ENCODE measurements at regions of chr18 and their contacts with region 1.

Region 1: GRCh38 chr18:23416298-23416697 is 36.8 kb upstream of the RIOK3 start:
- DNase-seq: no peak
- H3K4me3 ChIP-seq: no peak overlapping the region
- H3K4me1 ChIP-seq: no peaks in the 10 kb centered on the region
- H3K27me3 ChIP-seq: no peaks in the 10 kb centered on the region

Region 2: GRCh38 chr18:22800551-22800951 is 615.7 kb before region 1 on chr18:
- in situ Hi-C with region 1: loop called (anchors 10 kb)
- DNase-seq: no peak
- H3K4me3 ChIP-seq: no peak overlapping the region
- H3K4me1 ChIP-seq: no peaks in the 10 kb centered on the region; the same call in 1 of the 2 replicates
- H3K27me3 ChIP-seq: no peaks in the 10 kb centered on the region

Region 3: GRCh38 chr18:23032030-23032582 is 384.2 kb before region 1 on chr18:
- in situ Hi-C with region 1: loop called (anchors 10 kb)
- DNase-seq: peak; percentile 60 to 78
- H3K4me3 ChIP-seq: no peak overlapping the region
- H3K4me1 ChIP-seq: peaks cover 23% of the 10 kb centered on the region
- H3K27me3 ChIP-seq: no peaks in the 10 kb centered on the region

Region 4: DNA sequence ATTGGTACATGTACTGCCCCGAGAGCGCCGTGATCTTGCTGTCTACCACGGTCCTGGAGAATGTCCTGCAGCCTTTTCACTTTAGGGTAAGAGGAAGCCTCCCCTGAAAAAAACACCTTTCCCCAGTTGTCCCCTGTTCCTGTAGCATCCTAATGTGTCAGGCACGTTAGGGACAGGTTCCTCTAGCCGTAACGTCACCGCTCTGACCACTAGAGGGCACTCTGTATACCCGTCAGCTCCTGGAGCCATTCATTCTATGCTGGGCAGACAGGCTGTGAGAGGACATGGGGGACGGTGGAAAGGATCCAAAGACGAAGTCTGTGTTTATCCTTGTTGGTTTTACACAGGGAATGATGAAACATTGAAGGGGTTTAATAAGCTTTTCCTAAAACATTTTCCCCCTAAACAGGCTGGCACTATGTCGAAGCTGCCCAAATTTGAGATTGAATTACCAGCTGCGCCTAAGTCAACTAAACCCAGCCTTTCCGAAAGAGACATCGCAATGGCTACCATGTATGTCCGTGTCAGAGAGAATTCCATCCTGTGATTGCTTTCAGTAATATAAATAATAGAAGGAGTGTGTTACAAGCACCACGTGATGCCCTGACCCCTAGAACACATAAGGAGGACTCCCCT is 99.7 kb after region 1 on chr18:
- in situ Hi-C with region 1: no loop called
- DNase-seq: peak; percentile 64 to 84
- H3K4me3 ChIP-seq: no peak overlapping the region
- H3K4me1 ChIP-seq: no peaks in the 10 kb centered on the region
- H3K27me3 ChIP-seq: no peaks in the 10 kb centered on the region

Region 5: GRCh38 chr18:23798249-23798648 is 382.0 kb after region 1 on chr18:
- in situ Hi-C with region 1: no loop called
- DNase-seq: no peak
- H3K4me3 ChIP-seq: no peak overlapping the region
- H3K4me1 ChIP-seq: no peaks in the 10 kb centered on the region
- H3K27me3 ChIP-seq: peaks cover 3% of the 10 kb centered on the region; the same call in 1 of the 2 replicates